ENCODE measurements at regions of chr9 and their contacts with region 1.

Region 1: DNA sequence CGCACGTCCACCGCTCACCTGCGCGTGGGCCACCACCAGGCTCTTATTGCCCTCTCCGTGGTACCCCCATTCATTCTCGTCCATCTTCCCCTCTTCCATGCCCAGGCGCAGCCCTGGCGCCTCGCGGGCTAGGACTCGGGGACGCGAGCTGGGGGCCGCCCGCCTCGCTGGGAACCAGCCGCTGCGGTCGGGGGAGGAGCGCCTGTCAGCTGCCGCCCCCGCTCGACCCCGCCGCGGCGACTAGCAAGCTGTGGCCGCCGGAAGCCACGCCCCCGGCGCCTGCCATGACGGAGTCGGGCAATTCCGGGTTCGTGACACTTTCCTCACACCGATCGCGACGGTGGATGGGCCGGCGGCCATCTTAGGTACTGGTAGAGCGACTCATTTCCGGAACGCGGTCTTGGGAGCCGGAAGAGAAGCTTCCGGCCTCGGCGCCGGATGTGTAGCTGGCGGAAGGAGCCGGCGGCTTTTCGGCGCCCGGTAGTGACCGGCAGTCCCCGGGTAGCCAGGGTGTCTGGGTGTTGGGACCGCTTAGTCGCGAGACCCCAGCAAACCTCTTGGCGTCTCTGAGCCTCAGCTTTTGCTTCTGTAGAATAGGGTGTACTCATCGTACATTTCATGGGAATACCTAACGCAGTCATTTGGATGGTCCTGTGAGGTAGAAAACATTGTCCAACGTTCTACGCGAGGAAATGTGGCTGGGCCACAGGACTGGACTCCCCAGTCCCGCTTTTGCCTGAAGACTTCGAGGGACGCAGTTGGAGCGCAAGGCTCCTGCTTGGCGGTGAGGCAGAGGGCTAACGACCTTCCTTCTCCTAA is at the start of gene IPPK:
- DNase-seq: peak; percentile 93 to 99 (median 96)
- ATAC-seq: peak; percentile 93
- H3K4me3 ChIP-seq: peak within 1 kb of the TSS; percentile 87 to 98
- H3K4me3 Mint-ChIP-seq: peak within 1 kb of the TSS; percentile 96
- H3K27ac ChIP-seq: peak within 1 kb of the TSS; percentile 96
- H3K27ac Mint-ChIP-seq: peak within 1 kb of the TSS; percentile 98
- H3K4me1 ChIP-seq: peaks cover 23% of the 10 kb centered on the region
- H3K4me1 Mint-ChIP-seq: peaks cover 39% of the 10 kb centered on the region
- H3K27me3 ChIP-seq: no peaks in the 10 kb centered on the region
- H3K27me3 Mint-ChIP-seq: no peaks in the 10 kb centered on the region
- CTCF ChIP-seq: no peak
- total RNA-seq, gene IPPK: 12.2 to 12.8 TPM

Region 2: GRCh38 chr9:92616655-92617111 is 53.4 kb before region 1 on chr9:
- CTCF ChIA-PET with region 1: no interaction called
- POLR2A ChIA-PET with region 1: no interaction called
- intact Hi-C with region 1: no loop called
- DNase-seq: peak in 1 of 9 experiments; percentile 19
- ATAC-seq: no peak
- H3K4me3 ChIP-seq: no peak overlapping the region
- H3K4me3 Mint-ChIP-seq: no peak overlapping the region
- H3K27ac ChIP-seq: no peak overlapping the region
- H3K27ac Mint-ChIP-seq: no peak overlapping the region
- H3K4me1 ChIP-seq: no peaks in the 10 kb centered on the region
- H3K4me1 Mint-ChIP-seq: no peaks in the 10 kb centered on the region
- H3K27me3 ChIP-seq: no peaks in the 10 kb centered on the region
- H3K27me3 Mint-ChIP-seq: no peaks in the 10 kb centered on the region
- CTCF ChIP-seq: no peak

Region 3: GRCh38 chr9:92877531-92878430 is 207.7 kb after region 1 on chr9 and contains the start of gene ZNF484:
- CTCF ChIA-PET with region 1: no interaction called
- POLR2A ChIA-PET with region 1: no interaction called
- intact Hi-C with region 1: loop called (anchors 1 kb)
- DNase-seq: peak; percentile 91 to 100 (median 98)
- ATAC-seq: peak; percentile 96
- H3K4me3 ChIP-seq: peak within 1 kb of the TSS; percentile 76 to 85
- H3K4me3 Mint-ChIP-seq: peak within 1 kb of the TSS; percentile 100
- H3K27ac ChIP-seq: peak within 1 kb of the TSS; percentile 81 to 90
- H3K27ac Mint-ChIP-seq: peak within 1 kb of the TSS; percentile 100
- H3K4me1 ChIP-seq: peaks cover 19% of the 10 kb centered on the region
- H3K4me1 Mint-ChIP-seq: peaks cover 48% of the 10 kb centered on the region
- H3K27me3 ChIP-seq: no peaks in the 10 kb centered on the region
- H3K27me3 Mint-ChIP-seq: no peaks in the 10 kb centered on the region
- CTCF ChIP-seq: no peak
- total RNA-seq, gene ZNF484: 18.4 to 18.7 TPM